ENCODE measurements at regions of chr1 and their contacts with region 1.

Region 1: GRCh38 chr1:84492726-84493125 is 13.5 kb upstream of the SPATA1 start:
- DNase-seq: no peak
- ATAC-seq: no peak
- H3K4me3 ChIP-seq: no peak overlapping the region
- H3K4me3 Mint-ChIP-seq: no peak overlapping the region
- H3K27ac ChIP-seq: no peak overlapping the region
- H3K27ac Mint-ChIP-seq: no peak overlapping the region
- H3K4me1 ChIP-seq: peaks cover 1 to 3% of the 10 kb centered on the region in 2 donors
- H3K4me1 Mint-ChIP-seq: peaks cover 2% of the 10 kb centered on the region
- H3K27me3 ChIP-seq: no peaks in the 10 kb centered on the region
- H3K27me3 Mint-ChIP-seq: no peaks in the 10 kb centered on the region
- CTCF ChIP-seq: no peak

Region 2: GRCh38 chr1:84478876-84479868 is 13.6 kb before region 1 on chr1 and contains the start of gene RPF1:
- CTCF ChIA-PET with region 1: interaction called, 5 read pairs
- POLR2A ChIA-PET with region 1: no interaction called
- intact Hi-C with region 1: loop called (anchors 1 kb)
- DNase-seq: peak; percentile 88
- ATAC-seq: peak; percentile 95
- H3K4me3 ChIP-seq: peak within 1 kb of the TSS; percentile 66 to 90 (median 88)
- H3K4me3 Mint-ChIP-seq: peak within 1 kb of the TSS; percentile 94
- H3K27ac ChIP-seq: peak within 1 kb of the TSS; percentile 78 to 81
- H3K27ac Mint-ChIP-seq: peak within 1 kb of the TSS; percentile 91
- H3K4me1 ChIP-seq: peaks cover 19 to 32% of the 10 kb centered on the region in 2 donors
- H3K4me1 Mint-ChIP-seq: peaks cover 40% of the 10 kb centered on the region
- H3K27me3 ChIP-seq: peaks cover 0 to 24% (median 14%) of the 10 kb centered on the region in 4 experiments
- H3K27me3 Mint-ChIP-seq: peaks cover 30% of the 10 kb centered on the region
- CTCF ChIP-seq: no peak
- total RNA-seq, gene RPF1: 38.8 and 40.2 TPM in 2 replicates

Measured in B cell (primary cell).